CD8-positive, alpha-beta T cell (primary cell): ENCODE measurements at regions of chr21 and their contacts with region 1.

Region 1: GRCh38 chr21:29064850-29065481 is 8.5 kb downstream of the CCT8 start:
- DNase-seq: no peak
- ATAC-seq: no peak
- H3K4me3 ChIP-seq: no peak overlapping the region
- H3K4me3 Mint-ChIP-seq: no peak overlapping the region
- H3K27ac ChIP-seq: no peak overlapping the region
- H3K27ac Mint-ChIP-seq: peak overlapping the region; percentile 45
- H3K4me1 ChIP-seq: no peaks in the 10 kb centered on the region
- H3K4me1 Mint-ChIP-seq: peaks cover 13% of the 10 kb centered on the region
- H3K27me3 ChIP-seq: no peaks in the 10 kb centered on the region
- H3K27me3 Mint-ChIP-seq: no peaks in the 10 kb centered on the region
- CTCF ChIP-seq: no peak

Region 2: GRCh38 chr21:29018540-29018939 is 46.4 kb before region 1 on chr21:
- CTCF ChIA-PET with region 1: no interaction called
- POLR2A ChIA-PET with region 1: no interaction called
- intact Hi-C with region 1: no loop called
- DNase-seq: no peak
- ATAC-seq: no peak
- H3K4me3 ChIP-seq: peak overlapping the region; percentile 70 to 99
- H3K4me3 Mint-ChIP-seq: peak overlapping the region; percentile 89
- H3K27ac ChIP-seq: peak overlapping the region; percentile 77 to 79
- H3K27ac Mint-ChIP-seq: peak overlapping the region; percentile 93
- H3K4me1 ChIP-seq: peaks cover 38% of the 10 kb centered on the region
- H3K4me1 Mint-ChIP-seq: peaks cover 41% of the 10 kb centered on the region
- H3K27me3 ChIP-seq: no peaks in the 10 kb centered on the region
- H3K27me3 Mint-ChIP-seq: no peaks in the 10 kb centered on the region
- CTCF ChIP-seq: no peak

Region 3: DNA sequence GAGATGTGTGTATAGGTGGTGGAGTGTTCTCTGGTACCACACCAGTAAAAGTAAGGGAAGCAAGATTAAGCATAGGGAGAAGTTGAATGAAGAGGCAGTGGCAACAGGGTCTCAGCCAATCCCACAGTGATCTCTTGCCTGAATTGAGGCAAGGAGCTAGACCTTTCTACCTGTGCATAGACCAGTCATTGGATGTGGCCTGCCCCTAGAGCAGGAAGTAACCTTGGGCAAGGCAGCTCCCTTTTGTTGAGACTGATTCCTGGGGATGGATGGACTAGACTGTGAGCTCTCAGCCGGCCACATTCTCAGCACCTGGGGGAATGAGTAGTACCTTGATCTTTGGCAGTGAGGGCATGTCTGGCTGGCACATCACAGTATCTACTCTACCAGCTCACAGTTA is 34.1 kb before region 1 on chr21:
- CTCF ChIA-PET with region 1: no interaction called
- POLR2A ChIA-PET with region 1: interaction called, 3 read pairs
- intact Hi-C with region 1: loop called in 1 of 2 experiments (anchors 2 kb)
- DNase-seq: no peak
- ATAC-seq: no peak
- H3K4me3 ChIP-seq: no peak overlapping the region
- H3K4me3 Mint-ChIP-seq: no peak overlapping the region
- H3K27ac ChIP-seq: no peak overlapping the region
- H3K27ac Mint-ChIP-seq: no peak overlapping the region
- H3K4me1 ChIP-seq: peaks cover 8% of the 10 kb centered on the region
- H3K4me1 Mint-ChIP-seq: peaks cover 45% of the 10 kb centered on the region
- H3K27me3 ChIP-seq: no peaks in the 10 kb centered on the region
- H3K27me3 Mint-ChIP-seq: no peaks in the 10 kb centered on the region
- CTCF ChIP-seq: no peak